ENCODE measurements at regions of chr2 and their contacts with region 1.

Region 1: GRCh38 chr2:230987137-230988020 is 8.5 kb upstream of the SPATA3 start:
- DNase-seq: peak; percentile 90
- ATAC-seq: peak; percentile 93
- H3K4me3 ChIP-seq: peak overlapping the region; percentile 32
- H3K27ac ChIP-seq: no peak overlapping the region
- H3K4me1 ChIP-seq: peaks cover 3% of the 10 kb centered on the region
- H3K27me3 ChIP-seq: peaks cover 23% of the 10 kb centered on the region
- CTCF ChIP-seq: peak; percentile 92

Region 2: GRCh38 chr2:230824406-230824978 is 162.9 kb before region 1 on chr2:
- intact Hi-C with region 1: loop called (anchors 10 kb)
- DNase-seq: no peak
- ATAC-seq: peak; percentile 81
- H3K4me3 ChIP-seq: peak overlapping the region; percentile 14
- H3K27ac ChIP-seq: no peak overlapping the region
- H3K4me1 ChIP-seq: peaks cover 3% of the 10 kb centered on the region
- H3K27me3 ChIP-seq: peaks cover 32% of the 10 kb centered on the region
- CTCF ChIP-seq: peak; percentile 74

Region 3: GRCh38 chr2:230902180-230902899 is 85.0 kb before region 1 on chr2:
- intact Hi-C with region 1: loop called (anchors 10 kb)
- DNase-seq: peak; percentile 67
- ATAC-seq: peak; percentile 80
- H3K4me3 ChIP-seq: no peak overlapping the region
- H3K27ac ChIP-seq: no peak overlapping the region
- H3K4me1 ChIP-seq: no peaks in the 10 kb centered on the region
- H3K27me3 ChIP-seq: no peaks in the 10 kb centered on the region
- CTCF ChIP-seq: peak; percentile 81

Region 4: DNA sequence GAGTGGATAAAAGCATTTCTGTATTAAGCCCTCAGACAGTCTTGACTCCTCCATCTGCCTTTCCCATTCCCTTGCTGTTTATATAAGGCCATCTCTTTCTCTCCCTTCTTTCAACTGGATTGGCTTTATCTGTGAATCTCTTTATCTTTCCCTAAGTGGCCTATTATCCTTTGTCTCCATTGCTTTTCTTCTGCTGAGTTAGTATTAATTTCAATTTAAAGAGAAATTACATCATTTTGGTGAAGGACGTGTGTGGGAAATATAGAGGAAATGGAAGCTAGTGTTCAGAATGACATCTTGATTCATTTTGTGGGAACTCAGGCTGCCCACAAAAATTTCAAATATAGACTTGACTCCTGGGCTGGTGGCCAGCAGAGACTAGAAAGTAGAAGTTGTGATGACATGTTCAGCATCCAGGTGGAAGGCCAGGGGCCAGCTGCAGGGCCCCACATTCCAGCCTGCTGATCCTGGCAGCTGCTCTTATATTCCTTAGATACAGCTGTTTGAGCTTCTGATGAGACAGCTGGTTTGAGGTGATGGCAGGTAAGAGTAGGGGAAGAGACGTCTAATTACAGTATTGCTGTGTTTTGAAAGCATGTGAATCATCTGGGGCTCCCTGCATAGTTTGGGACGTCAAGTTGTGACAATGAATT is 1026.4 kb after region 1 on chr2:
- intact Hi-C with region 1: no loop called
- DNase-seq: no peak
- ATAC-seq: peak; percentile 40
- H3K4me3 ChIP-seq: no peak overlapping the region
- H3K27ac ChIP-seq: no peak overlapping the region
- H3K4me1 ChIP-seq: no peaks in the 10 kb centered on the region
- H3K27me3 ChIP-seq: no peaks in the 10 kb centered on the region
- CTCF ChIP-seq: no peak